Activated CD4-positive, alpha-beta T cell treated with anti-CD3 and anti-CD28 coated beads for 36 hours (primary cell): ENCODE measurements at regions of chr19 and their contacts with region 1.

Region 1: GRCh38 chr19:38647368-38647965 is at the start of gene ACTN4:
- DNase-seq: peak; percentile 100
- ATAC-seq: peak; percentile 92
- H3K4me3 Mint-ChIP-seq: peak within 1 kb of the TSS; percentile 98
- H3K27ac Mint-ChIP-seq: peak within 1 kb of the TSS; percentile 81
- H3K4me1 Mint-ChIP-seq: peaks cover 39% of the 10 kb centered on the region
- H3K27me3 Mint-ChIP-seq: peaks cover 10% of the 10 kb centered on the region
- total RNA-seq, gene ACTN4: 181 to 182 TPM

Region 2: GRCh38 chr19:38506723-38507550 is 140.5 kb before region 1 on chr19:
- CTCF ChIA-PET with region 1: no interaction called
- POLR2A ChIA-PET with region 1: no interaction called
- intact Hi-C with region 1: loop called in 1 of 2 experiments (anchors 1 kb)
- DNase-seq: peak; percentile 98
- ATAC-seq: peak; percentile 94
- H3K4me3 Mint-ChIP-seq: no peak overlapping the region
- H3K27ac Mint-ChIP-seq: no peak overlapping the region
- H3K4me1 Mint-ChIP-seq: peaks cover 6% of the 10 kb centered on the region
- H3K27me3 Mint-ChIP-seq: peaks cover 2% of the 10 kb centered on the region

Region 3: DNA sequence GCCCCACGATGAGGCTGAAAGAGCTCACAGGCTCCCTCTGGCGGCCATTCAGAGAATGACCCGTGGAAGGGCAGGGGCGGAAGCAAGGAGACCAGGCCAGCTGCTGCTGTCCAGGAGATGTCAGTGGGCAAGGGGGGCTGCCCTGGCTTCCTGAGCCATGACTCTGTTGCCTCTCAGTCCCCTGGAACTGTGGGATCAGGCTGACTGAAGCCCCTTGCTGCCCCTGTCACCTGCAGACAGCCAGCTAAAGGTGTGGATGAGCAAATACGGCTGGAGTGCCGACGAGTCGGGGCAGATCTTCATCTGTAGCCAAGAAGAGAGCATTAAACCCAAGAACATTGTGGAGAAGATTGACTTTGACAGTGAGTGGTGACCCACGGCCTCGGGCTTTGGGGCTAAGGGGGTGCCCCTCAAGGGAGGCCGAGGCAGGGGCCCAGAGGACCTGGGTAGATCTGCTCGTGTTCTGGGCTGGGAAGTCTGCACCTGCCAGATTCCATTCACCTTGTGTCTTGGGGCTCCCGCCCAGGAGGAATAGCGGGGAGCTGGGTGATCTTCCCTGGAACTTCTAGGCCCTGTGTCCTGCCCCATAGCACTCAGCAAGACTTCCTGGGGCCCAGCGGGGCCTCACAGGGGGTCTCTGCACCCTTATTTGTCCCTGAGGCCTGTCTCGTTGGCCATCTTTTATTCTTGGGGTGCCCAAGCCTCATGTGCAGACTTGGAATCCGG is 12.5 kb before region 1 on chr19:
- CTCF ChIA-PET with region 1: interaction called, 12 read pairs
- POLR2A ChIA-PET with region 1: interaction called, 4 read pairs
- intact Hi-C with region 1: loop called in 1 of 2 experiments (anchors 1 kb)
- DNase-seq: peak; percentile 84
- ATAC-seq: no peak
- H3K4me3 Mint-ChIP-seq: no peak overlapping the region
- H3K27ac Mint-ChIP-seq: peak overlapping the region; percentile 90
- H3K4me1 Mint-ChIP-seq: peaks cover 28% of the 10 kb centered on the region
- H3K27me3 Mint-ChIP-seq: no peaks in the 10 kb centered on the region

Region 4: DNA sequence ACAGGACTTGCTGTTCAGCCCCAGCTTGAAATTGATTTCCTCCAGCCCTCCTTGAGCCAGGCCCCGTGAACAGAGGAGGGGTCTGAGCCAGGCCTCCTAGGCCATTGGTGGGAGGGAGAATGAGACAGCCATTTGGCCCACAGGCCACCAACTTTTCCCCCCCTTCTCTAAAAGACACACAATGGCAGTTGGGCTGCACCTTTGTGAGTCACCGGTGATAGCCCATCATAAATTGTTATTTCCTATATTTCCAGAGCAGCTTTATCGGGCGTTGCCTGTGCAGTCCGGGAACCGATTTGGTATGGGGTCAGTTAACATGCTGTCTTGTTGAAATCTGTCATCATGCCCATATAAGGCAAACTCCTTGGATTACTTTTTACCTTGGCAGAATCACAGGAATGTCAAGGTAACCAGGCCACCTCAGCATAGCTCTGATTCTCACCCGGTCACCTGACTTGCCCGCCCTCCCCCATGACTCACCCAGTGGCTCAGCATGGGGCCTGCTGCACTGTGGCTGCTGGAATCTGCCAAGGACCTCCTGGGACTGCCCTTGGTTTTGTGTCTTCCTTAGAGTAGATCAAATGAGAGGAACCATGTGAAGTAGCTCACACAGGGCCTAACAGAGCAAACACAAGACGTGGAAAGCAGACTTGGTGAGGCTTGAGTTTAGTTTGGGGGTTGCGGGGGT is 36.1 kb after region 1 on chr19:
- CTCF ChIA-PET with region 1: no interaction called
- POLR2A ChIA-PET with region 1: no interaction called
- intact Hi-C with region 1: loop called (anchors 1 to 5 kb)
- DNase-seq: peak; percentile 75
- ATAC-seq: peak; percentile 61
- H3K4me3 Mint-ChIP-seq: no peak overlapping the region
- H3K27ac Mint-ChIP-seq: peak overlapping the region; percentile 80
- H3K4me1 Mint-ChIP-seq: peaks cover 76% of the 10 kb centered on the region
- H3K27me3 Mint-ChIP-seq: no peaks in the 10 kb centered on the region

Region 5: DNA sequence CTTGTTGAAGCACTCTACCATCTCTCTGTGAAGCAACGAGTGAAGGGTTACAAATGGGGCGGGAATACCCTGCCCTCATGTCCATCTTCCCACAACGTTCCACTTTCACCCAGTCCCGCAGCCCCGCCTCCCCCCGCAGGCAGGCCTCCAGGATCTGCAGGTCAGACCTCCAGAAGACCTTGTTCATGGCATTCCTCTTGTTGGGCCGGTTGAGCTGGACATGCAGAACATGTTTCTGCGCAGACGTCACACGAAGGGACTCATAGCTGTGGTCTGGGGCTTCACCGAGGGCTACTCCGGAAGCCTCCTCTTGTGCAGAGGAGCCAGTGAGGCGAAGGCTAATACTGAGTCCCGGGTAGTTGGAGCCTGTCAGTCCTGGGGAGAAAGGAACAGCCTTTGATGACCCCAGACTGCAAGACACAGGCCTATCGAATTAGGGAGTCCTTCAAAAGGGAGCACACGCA is 183.7 kb after region 1 on chr19:
- CTCF ChIA-PET with region 1: no interaction called
- POLR2A ChIA-PET with region 1: interaction called, 3 read pairs
- intact Hi-C with region 1: loop called in 1 of 2 experiments (anchors 1 kb)
- DNase-seq: peak; percentile 58
- ATAC-seq: peak; percentile 53
- H3K4me3 Mint-ChIP-seq: peak overlapping the region; percentile 87
- H3K27ac Mint-ChIP-seq: peak overlapping the region; percentile 83
- H3K4me1 Mint-ChIP-seq: peaks cover 25% of the 10 kb centered on the region
- H3K27me3 Mint-ChIP-seq: no peaks in the 10 kb centered on the region